Dorsolateral prefrontal cortex (tissue), 120 donors: ENCODE measurements at regions of chr4 and their contacts with region 1.

Region 1: GRCh38 chr4:42371306-42372252 is 25.7 kb upstream of the SHISA3 start:
- DNase-seq: peak in 1 of 10 donors; percentile 20
- H3K4me3 ChIP-seq: no peak overlapping the region
- H3K27ac ChIP-seq: no peak overlapping the region
- H3K27me3 ChIP-seq: peaks cover 0 to 3% (median 0%) of the 10 kb centered on the region in 45 donors
- CTCF ChIP-seq: peak; percentile 31 to 85 (median 65)

Region 2: GRCh38 chr4:42519803-42520417 is 148.3 kb after region 1 on chr4:
- intact Hi-C with region 1: loop called (anchors 5 kb)
- DNase-seq: peak in 2 of 10 donors; percentile 37 to 43
- H3K4me3 ChIP-seq: no peak overlapping the region
- H3K27ac ChIP-seq: peak overlapping the region in 3 of 59 donors; percentile 7 to 17 (median 11)
- H3K27me3 ChIP-seq: no peaks in the 10 kb centered on the region
- CTCF ChIP-seq: peak; percentile 56 to 91 (median 78)

Region 3: GRCh38 chr4:42843694-42844093 is 472.1 kb after region 1 on chr4:
- intact Hi-C with region 1: loop called in 1 of 2 experiments (anchors 10 kb)
- DNase-seq: no peak
- H3K4me3 ChIP-seq: no peak overlapping the region
- H3K27ac ChIP-seq: no peak overlapping the region
- H3K27me3 ChIP-seq: no peaks in the 10 kb centered on the region
- CTCF ChIP-seq: peak in 40 of 56 donors; percentile 8 to 65 (median 30)